ENCODE measurements at regions of chr12 and their contacts with region 1.

Region 1: GRCh38 chr12:45762185-45763110 is 32.9 kb downstream of the ARID2 start:
- DNase-seq: peak; percentile 23
- CTCF ChIP-seq: peak; percentile 58

Region 2: DNA sequence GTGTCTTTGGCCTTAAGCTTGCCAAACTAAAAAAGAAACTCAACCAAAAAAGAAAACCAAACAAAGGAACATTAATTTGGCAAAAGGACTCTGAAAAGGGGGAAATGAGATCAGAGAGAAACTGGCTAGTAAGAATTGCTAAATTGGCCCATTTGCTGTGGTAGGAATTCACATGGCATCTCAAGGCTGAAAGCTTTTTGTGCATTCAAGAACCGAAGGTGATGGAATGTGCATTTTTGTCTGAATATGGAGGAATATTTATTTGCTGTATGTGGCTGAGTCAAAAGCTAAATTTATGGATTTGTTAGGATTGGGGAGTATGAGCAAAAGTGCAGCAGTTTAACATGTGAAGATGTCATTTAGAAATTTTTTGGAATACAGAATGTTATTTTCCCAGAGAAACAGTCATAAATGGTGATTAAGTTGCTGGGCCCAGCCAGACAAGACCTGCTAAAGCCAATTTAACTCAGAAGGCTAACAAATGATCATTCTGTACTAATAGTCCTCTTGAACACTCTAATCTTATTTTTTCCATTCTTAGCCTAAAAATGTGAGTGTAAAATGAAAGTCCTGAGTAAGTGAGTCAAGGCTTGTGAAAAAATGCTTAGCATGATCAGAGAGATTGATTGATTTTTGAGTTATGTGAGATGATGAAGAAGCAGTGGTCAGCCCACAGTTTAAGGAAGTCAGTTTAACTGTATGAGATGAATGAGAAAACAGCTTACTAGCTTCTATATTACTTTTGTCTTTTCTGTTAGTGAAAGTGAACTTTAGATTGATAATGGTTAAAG is 452.4 kb before region 1 on chr12:
- CTCF ChIA-PET with region 1: no interaction called
- POLR2A ChIA-PET with region 1: no interaction called
- DNase-seq: no peak
- CTCF ChIP-seq: no peak

Region 3: GRCh38 chr12:45745861-45746277 is 16.6 kb before region 1 on chr12:
- CTCF ChIA-PET with region 1: interaction called, 18 read pairs
- POLR2A ChIA-PET with region 1: no interaction called
- DNase-seq: no peak
- CTCF ChIP-seq: peak; percentile 9

Region 4: GRCh38 chr12:45775964-45776363 is 13.5 kb after region 1 on chr12:
- CTCF ChIA-PET with region 1: interaction called, 11 read pairs
- POLR2A ChIA-PET with region 1: no interaction called
- DNase-seq: no peak
- CTCF ChIP-seq: no peak

Region 5: GRCh38 chr12:45781065-45781464 is 18.6 kb after region 1 on chr12:
- CTCF ChIA-PET with region 1: interaction called, 11 read pairs
- POLR2A ChIA-PET with region 1: no interaction called
- DNase-seq: no peak
- CTCF ChIP-seq: no peak

Region 6: DNA sequence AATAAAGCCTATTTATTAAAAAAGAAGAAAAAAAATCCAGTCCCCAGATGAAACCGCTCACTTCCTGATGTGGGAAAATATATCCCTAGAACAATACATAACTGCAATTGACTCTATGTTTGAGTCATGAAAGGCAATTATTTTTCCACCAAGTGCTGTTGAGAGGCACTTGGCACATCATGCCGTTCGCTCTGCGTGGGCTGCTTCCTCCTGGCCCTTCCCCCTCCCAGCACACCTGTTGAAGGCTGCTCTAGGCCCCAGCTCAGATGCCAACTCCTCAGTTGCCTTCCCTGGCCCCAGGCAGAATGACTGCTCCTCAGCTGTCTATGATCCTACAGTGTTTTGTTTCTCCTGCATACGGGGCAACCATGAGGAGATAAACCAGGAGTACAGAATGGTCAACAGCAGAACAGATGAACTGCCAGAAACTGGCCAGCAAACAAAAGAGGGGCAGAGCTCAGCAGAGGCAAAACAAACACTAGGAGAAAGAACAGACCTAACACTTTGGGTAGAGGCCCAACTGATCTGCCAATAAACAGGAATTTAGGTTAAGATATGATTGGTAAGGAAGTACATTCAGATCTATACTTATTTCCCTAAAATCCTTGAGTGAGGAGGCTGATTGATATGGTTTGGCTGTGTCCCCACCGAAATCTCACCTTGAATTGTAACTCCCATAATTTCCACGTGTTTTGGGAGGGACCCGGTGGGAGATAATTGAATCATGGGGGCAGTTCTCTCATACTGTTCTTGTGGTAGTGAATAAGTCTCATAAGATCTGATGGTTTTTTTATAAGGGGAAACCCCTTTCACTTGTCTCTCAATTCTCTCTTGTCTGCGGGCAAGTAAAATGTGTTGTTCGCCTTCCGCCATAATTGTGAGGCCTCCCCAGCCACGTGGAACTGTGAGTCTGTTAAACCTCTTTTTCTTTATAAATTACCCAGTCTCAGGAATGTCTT is 447.7 kb after region 1 on chr12:
- CTCF ChIA-PET with region 1: no interaction called
- POLR2A ChIA-PET with region 1: no interaction called
- DNase-seq: no peak
- CTCF ChIP-seq: no peak